Pancreas (tissue), 10 donors: ENCODE measurements at regions of chr1 and their contacts with region 1.

Region 1: GRCh38 chr1:227343727-227344551 is 25.6 kb upstream of the CDC42BPA start:
- DNase-seq: no peak
- ATAC-seq: peak in 1 of 4 donors; percentile 47
- H3K4me3 ChIP-seq: no peak overlapping the region
- H3K27ac ChIP-seq: no peak overlapping the region
- H3K4me1 ChIP-seq: no peaks in the 10 kb centered on the region
- H3K27me3 ChIP-seq: no peaks in the 10 kb centered on the region
- CTCF ChIP-seq: no peak

Region 2: DNA sequence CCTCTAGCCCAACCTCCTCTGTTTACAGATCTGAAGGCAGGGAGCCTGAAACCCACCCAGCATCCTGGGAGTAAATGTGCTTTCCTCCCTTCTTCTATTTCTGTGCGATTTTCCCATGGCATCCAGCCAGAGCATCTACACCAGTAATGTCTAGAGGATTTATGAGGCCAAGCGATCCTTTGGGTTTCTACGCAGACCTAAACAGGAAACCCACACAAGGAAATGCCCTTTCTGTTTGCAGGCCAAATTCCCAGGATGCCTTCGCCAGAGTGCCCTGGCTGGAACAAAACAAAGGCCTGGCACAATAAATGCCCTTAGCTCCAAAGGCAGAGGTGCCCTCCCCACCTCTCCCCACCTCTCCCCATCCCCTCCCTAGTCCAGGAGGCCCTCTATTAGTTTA is 84.9 kb after region 1 on chr1:
- intact Hi-C with region 1: loop called in 1 of 3 experiments (anchors 10 kb)
- DNase-seq: peak in 2 of 6 donors; percentile 20 to 43
- ATAC-seq: peak; percentile 36 to 73 (median 60)
- H3K4me3 ChIP-seq: no peak overlapping the region
- H3K27ac ChIP-seq: peak overlapping the region in 2 of 4 donors; percentile 34 to 58
- H3K4me1 ChIP-seq: no peaks in the 10 kb centered on the region
- H3K27me3 ChIP-seq: no peaks in the 10 kb centered on the region
- CTCF ChIP-seq: no peak

Region 3: GRCh38 chr1:227532019-227532619 is 188.2 kb after region 1 on chr1:
- intact Hi-C with region 1: no loop called
- DNase-seq: no peak
- ATAC-seq: no peak
- H3K4me3 ChIP-seq: no peak overlapping the region
- H3K27ac ChIP-seq: no peak overlapping the region
- H3K4me1 ChIP-seq: no peaks in the 10 kb centered on the region
- H3K27me3 ChIP-seq: no peaks in the 10 kb centered on the region
- CTCF ChIP-seq: no peak